MCF 10A (cell line): ENCODE measurements at regions of chr1 and their contacts with region 1.

Region 1: DNA sequence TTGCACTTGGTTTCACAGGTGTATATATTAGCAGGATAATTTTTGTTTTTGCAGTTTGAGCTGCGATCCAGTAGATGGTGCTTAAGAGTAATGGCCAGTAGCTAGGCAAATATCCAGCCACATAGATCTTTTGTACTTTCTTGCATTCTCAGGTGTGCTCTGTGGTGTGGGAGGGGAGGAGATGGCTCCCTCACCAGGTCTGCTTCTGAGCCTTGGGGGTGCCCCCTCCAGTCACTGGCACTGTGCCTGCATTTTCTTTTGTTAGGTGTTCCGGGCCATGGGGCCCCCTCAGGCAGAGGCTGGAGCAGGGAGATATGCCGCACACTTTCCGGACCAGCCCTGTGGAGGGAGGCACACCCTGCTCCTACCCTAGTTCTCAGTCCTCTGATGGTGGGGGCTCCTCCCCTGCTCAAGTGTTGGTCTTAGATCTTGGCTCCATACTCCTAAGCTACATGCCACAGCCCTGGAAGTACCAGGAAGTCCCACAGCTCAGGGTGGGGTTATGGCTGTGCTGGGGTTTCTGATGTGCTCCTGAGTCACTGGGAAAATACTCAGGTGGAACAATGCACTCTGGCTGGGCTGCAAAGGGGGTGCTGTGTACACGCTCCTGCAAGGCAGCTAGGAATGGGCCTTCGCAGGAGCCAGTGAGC is 197.6 kb upstream of the DMRTA2 start:
- DNase-seq: peak; percentile 78
- H3K4me3 Mint-ChIP-seq: peak overlapping the region; percentile 58
- H3K27ac Mint-ChIP-seq: peak overlapping the region; percentile 70
- H3K4me1 Mint-ChIP-seq: peaks cover 9% of the 10 kb centered on the region
- H3K27me3 Mint-ChIP-seq: no peaks in the 10 kb centered on the region
- CTCF ChIP-seq: peak; percentile 67

Region 2: GRCh38 chr1:50521703-50522102 is 99.1 kb before region 1 on chr1:
- CTCF ChIA-PET with region 1: no interaction called
- POLR2A ChIA-PET with region 1: no interaction called
- intact Hi-C with region 1: no loop called
- DNase-seq: no peak
- H3K4me3 Mint-ChIP-seq: no peak overlapping the region
- H3K27ac Mint-ChIP-seq: no peak overlapping the region
- H3K4me1 Mint-ChIP-seq: no peaks in the 10 kb centered on the region
- H3K27me3 Mint-ChIP-seq: no peaks in the 10 kb centered on the region
- CTCF ChIP-seq: no peak

Region 3: GRCh38 chr1:50548243-50548642 is 72.6 kb before region 1 on chr1:
- CTCF ChIA-PET with region 1: no interaction called
- POLR2A ChIA-PET with region 1: no interaction called
- intact Hi-C with region 1: no loop called
- DNase-seq: no peak
- H3K4me3 Mint-ChIP-seq: no peak overlapping the region
- H3K27ac Mint-ChIP-seq: no peak overlapping the region
- H3K4me1 Mint-ChIP-seq: no peaks in the 10 kb centered on the region
- H3K27me3 Mint-ChIP-seq: no peaks in the 10 kb centered on the region
- CTCF ChIP-seq: no peak

Region 4: GRCh38 chr1:50582346-50582745 is 38.5 kb before region 1 on chr1:
- CTCF ChIA-PET with region 1: no interaction called
- POLR2A ChIA-PET with region 1: no interaction called
- intact Hi-C with region 1: no loop called
- DNase-seq: no peak
- H3K4me3 Mint-ChIP-seq: no peak overlapping the region
- H3K27ac Mint-ChIP-seq: no peak overlapping the region
- H3K4me1 Mint-ChIP-seq: no peaks in the 10 kb centered on the region
- H3K27me3 Mint-ChIP-seq: no peaks in the 10 kb centered on the region
- CTCF ChIP-seq: no peak

Region 5: GRCh38 chr1:50605186-50605875 is 15.5 kb before region 1 on chr1:
- CTCF ChIA-PET with region 1: interaction called, 48 read pairs
- POLR2A ChIA-PET with region 1: interaction called, 9 read pairs
- intact Hi-C with region 1: no loop called
- DNase-seq: peak; percentile 70
- H3K4me3 Mint-ChIP-seq: no peak overlapping the region
- H3K27ac Mint-ChIP-seq: no peak overlapping the region
- H3K4me1 Mint-ChIP-seq: peaks cover 20% of the 10 kb centered on the region
- H3K27me3 Mint-ChIP-seq: no peaks in the 10 kb centered on the region
- CTCF ChIP-seq: peak; percentile 56

Region 6: DNA sequence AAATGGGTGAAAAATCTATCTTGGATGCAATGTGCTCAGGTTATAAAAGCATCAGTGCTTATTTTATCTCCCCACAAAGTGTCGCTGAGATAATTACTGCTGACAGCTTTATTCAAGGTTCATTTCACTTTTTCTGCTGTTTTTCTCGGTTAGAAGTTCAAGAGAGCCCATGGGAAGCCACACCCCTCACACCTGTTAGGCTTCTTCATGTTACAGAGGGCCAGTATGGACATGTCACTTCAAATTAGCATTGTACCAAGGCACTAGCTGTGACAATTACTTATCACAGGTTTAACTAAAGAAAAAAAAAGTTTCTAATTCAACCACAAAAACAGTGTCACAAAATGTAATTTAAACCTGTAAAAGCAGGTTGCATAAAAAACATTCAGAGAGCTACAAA is 10.2 kb before region 1 on chr1:
- CTCF ChIA-PET with region 1: interaction called, 48 read pairs
- POLR2A ChIA-PET with region 1: interaction called, 3 read pairs
- intact Hi-C with region 1: no loop called
- DNase-seq: no peak
- H3K4me3 Mint-ChIP-seq: no peak overlapping the region
- H3K27ac Mint-ChIP-seq: no peak overlapping the region
- H3K4me1 Mint-ChIP-seq: peaks cover 6% of the 10 kb centered on the region
- H3K27me3 Mint-ChIP-seq: no peaks in the 10 kb centered on the region
- CTCF ChIP-seq: no peak

Region 7: DNA sequence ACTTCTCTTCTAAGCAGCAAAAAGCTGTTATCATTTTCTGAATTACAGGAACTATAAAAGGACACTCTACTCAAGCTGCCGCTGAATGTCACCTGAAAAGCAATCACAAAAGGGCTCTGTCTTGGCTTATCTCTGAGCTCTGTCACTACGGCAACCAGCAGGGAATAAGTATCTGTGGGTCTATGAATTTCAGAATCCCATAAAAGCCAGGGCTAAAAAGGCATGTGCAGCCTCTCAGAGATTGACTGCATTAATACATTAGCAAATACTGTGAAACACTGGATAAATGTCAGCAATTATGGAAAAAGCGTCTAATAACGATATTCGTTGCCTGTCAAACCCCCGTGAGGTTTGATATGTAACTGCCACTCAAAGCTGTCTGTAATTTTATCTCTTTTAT is 12.7 kb after region 1 on chr1:
- CTCF ChIA-PET with region 1: interaction called, 13 read pairs
- POLR2A ChIA-PET with region 1: interaction called, 5 read pairs
- intact Hi-C with region 1: no loop called
- DNase-seq: no peak
- H3K4me3 Mint-ChIP-seq: no peak overlapping the region
- H3K27ac Mint-ChIP-seq: no peak overlapping the region
- H3K4me1 Mint-ChIP-seq: no peaks in the 10 kb centered on the region
- H3K27me3 Mint-ChIP-seq: no peaks in the 10 kb centered on the region
- CTCF ChIP-seq: no peak

Region 8: DNA sequence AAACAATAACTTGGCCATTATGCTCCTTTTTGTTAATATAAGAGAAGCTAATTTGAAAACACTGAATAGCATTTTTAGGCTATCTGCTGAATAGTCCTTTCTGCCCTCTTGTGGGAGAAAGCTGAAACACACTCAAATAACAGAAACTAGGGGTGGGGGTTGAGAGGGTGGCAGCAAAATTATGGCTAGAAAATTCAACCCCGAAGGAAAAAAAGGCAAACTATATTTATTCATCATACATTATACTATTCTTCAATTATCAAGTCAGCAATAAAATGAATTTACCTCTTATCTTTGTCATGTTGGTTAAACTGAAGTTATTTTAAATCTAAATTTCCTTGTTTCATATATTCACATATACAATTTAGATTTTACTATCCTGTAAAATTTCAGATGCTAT is 83.3 kb after region 1 on chr1:
- CTCF ChIA-PET with region 1: interaction called, 115 read pairs
- POLR2A ChIA-PET with region 1: interaction called, 17 read pairs
- intact Hi-C with region 1: loop called (anchors 1 kb)
- DNase-seq: peak; percentile 66
- H3K4me3 Mint-ChIP-seq: no peak overlapping the region
- H3K27ac Mint-ChIP-seq: no peak overlapping the region
- H3K4me1 Mint-ChIP-seq: peaks cover 12% of the 10 kb centered on the region
- H3K27me3 Mint-ChIP-seq: no peaks in the 10 kb centered on the region
- CTCF ChIP-seq: peak; percentile 60

Region 9: GRCh38 chr1:50735443-50735842 is 114.6 kb after region 1 on chr1:
- CTCF ChIA-PET with region 1: interaction called, 24 read pairs
- POLR2A ChIA-PET with region 1: no interaction called
- intact Hi-C with region 1: loop called (anchors 1 kb)
- DNase-seq: peak; percentile 45
- H3K4me3 Mint-ChIP-seq: no peak overlapping the region
- H3K27ac Mint-ChIP-seq: no peak overlapping the region
- H3K4me1 Mint-ChIP-seq: peaks cover 6% of the 10 kb centered on the region
- H3K27me3 Mint-ChIP-seq: no peaks in the 10 kb centered on the region
- CTCF ChIP-seq: peak; percentile 41